ENCODE measurements at regions of chr1 and their contacts with region 1.

Region 1: DNA sequence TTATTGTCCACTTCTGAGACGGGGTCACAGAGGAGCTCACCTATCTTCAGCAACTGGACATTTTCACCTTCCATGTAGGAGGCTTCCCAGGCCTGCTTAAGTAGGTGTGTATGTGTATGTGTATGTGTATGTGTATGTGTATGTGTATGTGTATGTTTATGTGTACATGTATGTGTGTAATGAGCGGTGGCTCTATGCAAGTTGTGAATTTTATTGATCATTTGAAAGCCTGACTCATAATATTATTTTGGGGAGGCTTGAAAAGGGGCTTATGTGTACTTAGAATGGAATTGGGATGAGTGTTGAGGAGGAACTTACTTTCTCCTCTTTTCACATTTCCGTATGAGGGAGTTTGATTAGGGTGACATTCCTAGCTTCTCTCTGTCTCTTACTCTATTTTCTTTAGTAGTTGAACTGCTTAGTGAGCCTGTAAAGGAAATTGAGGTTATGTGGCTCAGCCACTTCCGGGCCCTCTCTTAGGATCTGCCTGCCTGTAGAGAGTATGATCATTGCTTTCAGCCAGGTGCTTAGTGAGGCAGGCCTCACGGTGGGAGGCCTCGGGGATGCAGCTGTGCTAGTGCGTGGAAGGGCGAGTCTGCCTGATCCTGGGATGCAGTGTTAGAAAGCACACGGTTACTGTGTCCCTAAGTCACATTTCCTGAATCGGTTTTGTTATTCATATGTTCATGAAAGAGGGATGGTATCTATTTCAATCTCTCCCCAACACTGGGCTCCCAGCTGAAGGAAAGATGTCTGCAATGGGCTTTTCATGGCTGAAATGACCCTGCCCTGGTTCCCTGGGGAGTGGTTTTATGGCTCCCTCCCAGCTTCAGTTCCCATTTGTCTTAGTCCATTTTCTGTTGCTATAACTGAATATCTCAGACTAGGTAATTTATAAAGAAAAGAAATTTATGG is 61.1 kb downstream of the IER5 start:
- DNase-seq: no peak
- H3K4me3 ChIP-seq: no peak overlapping the region
- H3K27ac ChIP-seq: no peak overlapping the region
- H3K4me1 ChIP-seq: peaks cover 25% of the 10 kb centered on the region
- H3K27me3 ChIP-seq: no peaks in the 10 kb centered on the region

Region 2: DNA sequence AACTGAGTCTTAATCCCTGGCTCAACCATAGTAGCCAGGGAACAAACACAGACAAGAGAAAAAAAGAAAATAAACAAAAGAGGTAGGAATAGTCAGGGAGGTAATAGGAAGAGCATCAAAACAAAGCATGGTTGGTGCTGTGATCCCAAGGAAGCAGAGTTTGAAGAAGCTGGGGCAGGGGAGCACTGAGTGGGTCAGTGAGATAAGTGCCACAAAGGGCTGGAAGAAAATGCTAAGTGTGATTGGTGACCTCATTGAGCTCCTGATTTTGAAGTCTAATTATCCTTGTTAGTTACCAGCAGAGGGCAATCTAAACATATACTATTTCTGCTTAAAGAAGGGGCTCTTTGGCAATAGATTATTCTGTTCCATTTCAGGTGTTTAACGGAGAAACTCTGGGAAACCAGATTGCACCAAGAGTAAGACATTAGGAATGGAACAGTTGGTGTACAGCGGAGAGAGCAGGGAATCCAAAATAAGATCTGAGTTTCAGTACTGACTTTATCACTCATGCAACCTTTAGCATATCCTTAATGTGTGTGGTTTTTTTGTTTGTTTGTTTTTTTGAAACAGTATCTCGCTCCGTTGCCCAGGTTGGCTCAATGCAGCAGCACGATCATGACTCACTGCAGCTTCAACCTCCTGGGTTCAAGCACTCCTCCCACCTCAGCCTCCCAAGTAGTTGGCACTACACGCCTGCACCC is 267.6 kb before region 1 on chr1:
- in situ Hi-C with region 1: loop called (anchors 5 kb)
- DNase-seq: peak; percentile 79
- H3K4me3 ChIP-seq: no peak overlapping the region
- H3K27ac ChIP-seq: peak overlapping the region; percentile 9; the same call in 1 of the 2 replicates
- H3K4me1 ChIP-seq: no peaks in the 10 kb centered on the region
- H3K27me3 ChIP-seq: no peaks in the 10 kb centered on the region

Region 3: DNA sequence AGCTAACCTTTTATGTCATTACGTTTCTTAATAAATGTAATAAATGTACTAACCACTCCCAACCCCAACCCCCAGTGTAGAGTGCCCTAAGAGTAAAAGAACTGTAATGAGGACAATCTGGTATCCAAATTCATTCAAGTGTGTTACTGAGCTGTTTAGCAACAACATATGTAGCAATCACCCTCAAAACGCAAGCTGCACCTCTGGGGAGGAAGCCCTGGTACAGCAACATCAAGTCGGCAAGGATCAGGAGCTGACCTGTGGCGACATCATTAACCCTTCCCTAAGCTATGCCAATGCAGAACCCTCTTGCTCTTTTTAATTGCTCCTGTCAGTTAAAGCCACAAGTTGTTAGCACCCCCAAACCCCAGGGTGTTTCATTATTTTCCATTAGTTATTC is 174.0 kb before region 1 on chr1:
- in situ Hi-C with region 1: no loop called
- DNase-seq: no peak
- H3K4me3 ChIP-seq: no peak overlapping the region
- H3K27ac ChIP-seq: no peak overlapping the region
- H3K4me1 ChIP-seq: 0 out of 2 replicates have a peak, but pooled peaks cover 10% of the 10 kb centered on the region
- H3K27me3 ChIP-seq: no peaks in the 10 kb centered on the region

Region 4: DNA sequence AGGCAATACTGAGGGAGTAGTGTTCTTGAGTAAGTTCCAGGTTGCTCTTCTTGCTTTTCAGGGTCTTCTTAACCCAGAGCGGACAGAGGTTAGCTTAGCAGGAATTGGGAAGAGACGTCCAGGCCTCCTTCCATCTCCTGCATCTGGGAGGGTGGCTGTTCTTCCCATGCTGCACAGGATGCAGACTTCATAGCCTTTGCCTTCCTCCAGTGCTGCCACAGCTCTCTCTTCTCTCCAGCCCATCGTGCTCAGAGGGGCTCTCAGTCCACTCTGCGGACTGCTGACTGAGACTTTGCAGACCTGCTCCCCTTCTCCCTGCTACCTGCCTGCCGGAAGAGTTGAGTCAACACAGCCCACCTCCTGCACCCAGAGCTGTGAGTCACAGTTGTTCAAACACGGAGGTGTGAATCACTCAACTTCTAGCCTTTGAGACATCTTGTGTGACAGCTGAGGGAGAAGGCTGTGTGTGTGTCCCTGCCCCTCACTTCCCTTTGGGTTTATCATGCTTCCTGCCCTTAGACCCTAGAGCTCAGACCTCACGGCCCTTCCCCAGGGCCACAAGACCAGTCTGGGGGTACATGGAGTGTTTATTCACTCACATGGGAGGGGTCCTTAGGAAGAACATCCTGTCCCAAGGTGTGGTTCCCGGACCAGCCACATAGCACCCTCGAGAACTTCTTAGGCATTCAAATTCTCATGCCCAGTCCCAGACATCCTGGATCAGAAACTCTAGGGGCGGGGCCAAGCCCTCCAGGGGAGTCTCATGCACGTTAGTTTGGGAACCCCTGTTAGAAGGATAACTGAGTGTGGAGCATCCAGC is 175.4 kb after region 1 on chr1:
- in situ Hi-C with region 1: no loop called
- DNase-seq: no peak
- H3K4me3 ChIP-seq: no peak overlapping the region
- H3K27ac ChIP-seq: no peak overlapping the region
- H3K4me1 ChIP-seq: no peaks in the 10 kb centered on the region
- H3K27me3 ChIP-seq: peaks cover 33% of the 10 kb centered on the region

Measured in GM23248 (cell line).